ENCODE measurements at regions of chr17 and their contacts with region 1.

Region 1: DNA sequence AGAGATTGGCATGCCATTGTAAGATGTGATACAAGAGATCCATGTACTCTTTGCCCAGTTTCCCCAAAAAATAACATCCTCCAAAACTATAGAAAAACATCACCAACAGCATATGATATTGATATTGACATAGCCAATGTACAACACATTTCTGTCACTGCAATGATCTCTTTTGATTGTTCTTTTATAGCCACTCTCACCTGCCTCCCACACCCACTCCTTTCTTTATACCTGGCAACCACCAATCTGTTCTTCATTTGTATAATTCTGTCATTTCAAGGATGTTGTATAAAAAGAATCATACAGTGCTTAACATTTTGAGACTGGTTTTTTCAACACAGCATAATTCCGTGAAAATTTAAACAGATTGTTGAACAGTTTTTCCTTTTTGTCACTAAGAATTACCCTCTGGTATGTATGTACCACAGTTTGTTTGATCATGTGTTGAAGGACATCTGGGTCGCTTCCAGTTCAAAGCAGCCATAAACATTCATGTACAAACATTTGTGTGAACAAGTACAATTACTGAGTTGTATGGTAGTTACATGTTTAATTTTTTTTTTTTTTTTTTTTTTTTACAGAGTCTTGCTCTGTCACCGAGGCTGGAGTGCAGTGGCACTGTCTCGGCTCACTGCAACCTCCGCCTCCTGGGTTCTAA is 9.9 kb downstream of the KRTAP9-1 start:
- DNase-seq: no peak

Region 2: GRCh38 chr17:40230670-40231069 is 968.9 kb before region 1 on chr17:
- intact Hi-C with region 1: no loop called
- DNase-seq: no peak

Region 3: GRCh38 chr17:40664582-40665333 is 534.8 kb before region 1 on chr17 and contains the start of gene KRT222:
- intact Hi-C with region 1: loop called in 1 of 2 experiments (anchors 10 kb)
- DNase-seq: no peak
- total RNA-seq, gene KRT222: 1.1 to 7.7 TPM